Posterior vena cava (tissue), 2 donors: ENCODE measurements at regions of chr22 and their contacts with region 1.

Region 1: DNA sequence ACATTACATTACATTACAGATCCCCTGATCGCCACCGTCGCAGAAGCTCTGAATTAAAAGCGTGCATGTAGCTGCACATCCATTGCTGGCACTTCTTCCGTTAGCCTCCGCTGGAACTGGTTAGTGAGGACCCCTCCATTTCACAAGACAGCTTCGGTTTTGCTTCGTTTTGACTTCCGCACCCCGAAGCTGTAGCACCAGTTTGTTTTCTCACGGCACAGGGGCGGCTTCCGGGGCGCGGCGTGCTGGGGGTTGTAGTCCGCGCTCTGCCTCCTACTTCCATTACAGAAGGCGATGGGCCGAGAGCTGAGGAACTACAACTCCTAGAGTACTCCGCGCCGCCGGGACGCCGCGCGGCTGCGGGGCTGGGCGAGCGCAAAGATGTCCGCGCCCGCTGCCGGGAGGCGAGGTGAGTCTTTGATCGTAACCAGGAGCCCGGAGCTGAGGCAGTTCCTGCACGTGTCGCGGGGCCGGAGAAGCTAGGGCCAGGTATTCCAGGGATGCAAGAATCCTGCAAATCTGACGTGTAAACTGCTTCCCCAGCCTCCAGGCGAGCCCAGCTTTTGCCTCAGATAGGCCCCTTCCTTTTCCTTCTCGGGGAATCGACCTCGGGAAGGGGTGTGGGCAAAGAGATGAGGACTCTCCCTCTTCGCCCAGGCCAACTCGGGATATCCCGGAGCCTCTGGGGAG is at the start of gene PEX26:
- DNase-seq: peak; percentile 98
- total RNA-seq, gene PEX26: 25.5 to 28.5 TPM

Region 2: GRCh38 chr22:17754233-17754925 is 323.4 kb before region 1 on chr22:
- intact Hi-C with region 1: loop called in 1 of 2 experiments (anchors 2 kb)
- DNase-seq: no peak

Region 3: DNA sequence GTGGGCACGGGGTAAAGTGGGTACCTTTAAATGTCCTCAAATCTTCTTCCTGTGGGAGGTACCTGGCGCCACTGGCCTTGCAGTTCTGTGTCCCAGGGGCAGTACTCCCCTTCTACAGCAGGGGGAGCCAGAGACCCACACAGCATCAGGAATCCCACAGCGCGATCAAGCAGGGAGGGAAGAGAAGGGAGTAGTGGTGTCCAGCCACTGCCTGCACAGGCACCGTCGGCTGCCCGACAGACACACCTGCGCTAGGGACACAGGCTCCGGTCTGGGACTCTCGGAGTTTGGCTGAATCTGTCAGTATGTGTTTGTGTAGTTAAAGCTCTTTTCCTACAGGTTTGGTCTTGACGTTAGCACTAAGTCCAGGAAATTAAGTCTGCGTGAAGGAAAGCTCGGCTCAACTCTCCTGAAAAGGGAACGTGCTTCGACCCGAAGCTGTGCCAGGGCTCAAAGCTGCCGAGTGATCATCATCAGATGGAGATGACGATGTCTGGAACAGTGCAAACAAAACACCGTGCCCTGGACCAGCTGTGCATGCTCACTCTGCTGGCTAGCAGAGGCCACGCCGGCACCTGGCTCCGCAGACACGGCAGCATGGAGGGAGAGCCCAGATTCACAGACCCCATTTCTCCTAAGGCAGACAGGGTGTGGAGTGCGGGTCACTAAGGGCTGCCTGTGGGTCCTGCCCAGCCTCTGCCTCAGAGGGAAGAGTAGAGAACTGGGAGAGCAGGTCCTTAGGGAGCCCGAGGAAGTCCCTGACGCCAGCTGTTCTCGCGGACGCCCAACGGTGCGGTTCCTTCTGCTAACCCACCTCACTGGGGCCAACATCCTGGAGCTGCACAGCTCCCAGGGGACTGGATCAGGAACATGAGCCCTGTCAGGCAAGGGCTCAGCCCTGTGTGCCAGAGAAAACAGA is 247.5 kb before region 1 on chr22:
- intact Hi-C with region 1: loop called (anchors 2 to 5 kb)
- DNase-seq: peak; percentile 94

Region 4: GRCh38 chr22:17903564-17904295 is 174.1 kb before region 1 on chr22:
- intact Hi-C with region 1: loop called in 1 of 2 experiments (anchors 10 kb)
- DNase-seq: no peak

Region 5: GRCh38 chr22:17910561-17911311 is 167.0 kb before region 1 on chr22:
- intact Hi-C with region 1: loop called (anchors 5 to 10 kb)
- DNase-seq: peak; percentile 92

Region 6: GRCh38 chr22:18024276-18024947 is 53.4 kb before region 1 on chr22 and contains the start of gene MICAL3:
- intact Hi-C with region 1: no loop called
- DNase-seq: peak; percentile 86
- total RNA-seq, gene MICAL3: 106 to 114 TPM